ENCODE measurements at regions of chr2 and their contacts with region 1.

Region 1: DNA sequence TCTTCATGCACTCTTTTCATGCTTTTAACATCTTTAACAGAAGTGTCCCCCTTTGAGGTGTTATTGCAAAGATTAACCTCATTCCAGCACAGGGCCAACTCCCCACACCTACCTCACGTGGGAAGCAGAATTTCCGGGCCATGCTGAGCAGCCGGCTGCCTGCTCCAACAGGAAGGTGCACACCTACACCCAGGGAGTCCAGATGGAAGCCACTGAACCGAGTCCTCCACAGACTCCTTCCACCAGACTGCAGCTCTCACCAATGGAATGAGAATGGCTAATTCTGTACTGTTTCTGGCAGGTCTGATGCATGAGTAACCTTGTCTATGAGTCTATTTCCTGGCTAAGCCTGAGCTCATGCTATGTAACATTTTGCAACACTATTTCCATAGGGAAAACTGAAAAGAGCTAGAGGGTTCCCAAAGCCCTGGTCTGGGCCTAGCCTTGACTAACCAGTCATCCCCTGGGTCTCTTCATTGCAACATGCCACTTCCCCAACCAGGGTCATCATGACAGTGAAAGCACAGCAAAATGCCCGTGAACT is 11.0 kb downstream of the ERFE start:
- DNase-seq: peak; percentile 30 to 46
- ATAC-seq: peak; percentile 45 to 56
- H3K4me3 ChIP-seq: peak overlapping the region; percentile 15; the same call in 1 of the 3 replicates
- H3K27ac ChIP-seq: peak overlapping the region; percentile 88 to 89
- H3K4me1 ChIP-seq: peaks cover 33% of the 10 kb centered on the region
- CTCF ChIP-seq: no peak
- EP300 ChIP-seq: no peak
- POLR2A ChIP-seq: no peak
- RAD21 ChIP-seq: no peak

Region 2: DNA sequence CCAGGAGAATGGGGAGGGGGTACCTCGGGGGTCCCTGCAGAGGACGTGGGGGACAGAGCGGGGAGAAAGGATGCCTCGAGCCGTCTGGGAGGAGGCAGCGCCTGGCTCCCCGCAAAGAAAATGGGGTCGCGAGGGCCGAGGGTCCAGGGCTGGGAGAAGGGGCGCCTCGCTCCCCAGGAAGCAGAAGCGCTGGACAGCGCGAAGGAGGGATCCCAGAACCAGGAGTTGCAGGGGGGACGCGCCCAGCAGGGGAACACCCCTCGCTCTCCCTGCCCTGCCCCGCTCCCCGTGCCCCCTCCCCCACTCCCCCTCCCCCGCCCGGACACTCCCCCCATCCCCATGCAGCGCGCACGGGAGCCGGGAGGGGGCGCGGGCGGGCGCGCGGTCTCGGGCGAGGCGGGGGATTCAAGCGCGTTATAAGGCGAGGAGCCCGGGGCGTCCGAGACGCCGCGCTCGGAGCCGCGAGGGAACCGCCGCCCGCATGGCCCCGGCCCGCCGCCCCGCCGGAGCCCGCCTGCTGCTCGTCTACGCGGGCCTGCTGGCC is 11.2 kb before region 1 on chr2 and contains the start of gene ERFE:
- CTCF ChIA-PET with region 1: interaction called, 15 read pairs
- POLR2A ChIA-PET with region 1: no interaction called
- DNase-seq: peak; percentile 49 to 58
- ATAC-seq: peak; percentile 40 to 66; a peak in 5 of 6 replicates
- H3K4me3 ChIP-seq: peak within 1 kb of the TSS; percentile 59
- H3K27ac ChIP-seq: peak within 1 kb of the TSS; percentile 72 to 98
- H3K4me1 ChIP-seq: peaks cover 15% of the 10 kb centered on the region; the same call in 2 of the 3 replicates
- CTCF ChIP-seq: peak; percentile 64
- EP300 ChIP-seq: no peak
- POLR2A ChIP-seq: 0 out of 2 replicates have a peak, but pooled peaks have one; percentile 13
- RAD21 ChIP-seq: peak in 1 of 2 experiments; percentile 46; a peak in 3 of 5 replicates
- polyA plus RNA-seq, gene ERFE: 2.6 and 3.7 TPM in 2 replicates

Region 3: GRCh38 chr2:238706673-238707072 is 536.9 kb after region 1 on chr2:
- CTCF ChIA-PET with region 1: no interaction called
- POLR2A ChIA-PET with region 1: no interaction called
- DNase-seq: no peak
- ATAC-seq: no peak
- H3K4me3 ChIP-seq: no peak overlapping the region
- H3K27ac ChIP-seq: no peak overlapping the region
- H3K4me1 ChIP-seq: no peaks in the 10 kb centered on the region
- CTCF ChIP-seq: no peak
- EP300 ChIP-seq: no peak
- POLR2A ChIP-seq: no peak
- RAD21 ChIP-seq: no peak

Measured in A549 (cell line).